Activated T-helper 2 cell treated with anti-CD3 and anti-CD28 coated beads, Interferon-gamma antibody, Interleukin-2, Interleukin-4, amounts not matched to agents 10 μg/mL and 5 μg/mL and 100 μg/mL, durations not matched to agents 14 hours and 24 hours and 36 hours (primary cell): ENCODE measurements at regions of chr1 and their contacts with region 1.

Region 1: DNA sequence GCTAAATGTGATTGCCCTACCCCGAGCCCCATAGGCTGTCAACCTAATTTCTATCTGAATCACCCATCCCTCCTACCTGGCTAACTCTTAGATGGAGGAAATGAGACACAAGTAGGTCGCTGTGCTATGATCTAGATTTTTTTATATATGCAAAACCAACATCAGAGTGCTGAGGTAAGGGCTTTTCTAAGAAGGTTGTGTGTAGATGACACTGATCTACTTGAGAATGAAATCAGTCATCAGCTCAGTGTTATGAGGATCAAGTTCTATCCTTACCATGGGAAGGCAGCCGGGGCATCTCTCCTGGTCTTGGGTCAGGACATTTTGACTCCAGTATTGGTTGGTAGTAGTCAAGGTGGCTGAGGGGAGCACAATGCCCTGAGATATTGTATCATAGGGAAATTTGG is 23.6 kb downstream of the SLAMF1 start:
- DNase-seq: no peak
- H3K4me3 Mint-ChIP-seq: peak overlapping the region; percentile 68
- H3K27ac Mint-ChIP-seq: peak overlapping the region; percentile 100
- H3K4me1 Mint-ChIP-seq: peaks cover 87% of the 10 kb centered on the region
- H3K27me3 Mint-ChIP-seq: no peaks in the 10 kb centered on the region

Region 2: DNA sequence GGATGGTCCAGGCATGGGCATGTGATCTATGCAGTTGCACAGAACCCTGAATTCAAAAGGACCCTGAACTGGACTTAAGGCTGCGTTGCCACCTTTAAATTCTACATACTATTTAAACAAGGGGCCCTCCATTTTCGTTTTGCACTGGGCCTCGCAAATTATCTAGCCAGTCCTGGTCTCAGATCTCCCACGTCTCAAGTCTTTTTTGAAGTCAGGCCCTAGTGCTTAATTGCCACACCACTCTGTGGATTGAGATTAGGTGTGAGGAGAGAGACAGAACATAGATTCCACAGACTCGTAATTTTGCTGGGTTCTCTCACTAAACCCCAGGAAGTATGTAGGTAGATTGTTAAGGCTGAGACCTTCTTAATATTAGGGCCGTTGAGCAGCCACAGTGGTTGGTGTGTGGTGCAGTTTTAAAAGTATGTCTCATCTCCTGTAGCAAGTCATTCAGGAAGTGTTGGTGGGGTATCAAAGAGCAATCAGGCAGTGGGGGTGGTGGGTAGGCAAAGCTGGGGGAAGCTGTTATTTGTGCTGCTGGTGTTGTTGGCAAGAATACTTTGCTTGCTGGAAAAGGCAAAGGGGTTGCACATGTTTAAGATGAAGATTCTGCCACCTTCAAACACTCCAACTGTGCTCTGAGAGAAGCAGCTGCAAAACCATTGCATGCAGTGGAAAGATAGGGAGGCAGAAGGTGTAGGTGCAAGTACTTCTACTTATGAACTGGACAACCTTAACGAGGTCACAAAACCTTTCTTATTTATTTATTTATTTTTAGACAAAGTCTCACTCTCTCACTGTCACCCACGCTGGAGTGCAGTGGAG is 55.2 kb before region 1 on chr1:
- intact Hi-C with region 1: loop called (anchors 1 kb)
- DNase-seq: peak; percentile 59
- H3K4me3 Mint-ChIP-seq: peak overlapping the region; percentile 76
- H3K27ac Mint-ChIP-seq: peak overlapping the region; percentile 98
- H3K4me1 Mint-ChIP-seq: peaks cover 72% of the 10 kb centered on the region
- H3K27me3 Mint-ChIP-seq: no peaks in the 10 kb centered on the region

Region 3: GRCh38 chr1:160664573-160665051 is 41.4 kb after region 1 on chr1:
- intact Hi-C with region 1: loop called (anchors 5 kb)
- DNase-seq: peak; percentile 50
- H3K4me3 Mint-ChIP-seq: peak overlapping the region; percentile 15
- H3K27ac Mint-ChIP-seq: peak overlapping the region; percentile 91
- H3K4me1 Mint-ChIP-seq: peaks cover 62% of the 10 kb centered on the region
- H3K27me3 Mint-ChIP-seq: no peaks in the 10 kb centered on the region